ENCODE measurements at regions of chr16 and their contacts with region 1.

Region 1: GRCh38 chr16:13376174-13376573 is 474.8 kb downstream of the SHISA9 start:
- DNase-seq: peak; percentile 63
- ATAC-seq: peak; percentile 90
- H3K4me3 Mint-ChIP-seq: no peak overlapping the region
- H3K27ac Mint-ChIP-seq: no peak overlapping the region
- H3K4me1 Mint-ChIP-seq: peaks cover 4% of the 10 kb centered on the region
- H3K27me3 Mint-ChIP-seq: no peaks in the 10 kb centered on the region

Region 2: DNA sequence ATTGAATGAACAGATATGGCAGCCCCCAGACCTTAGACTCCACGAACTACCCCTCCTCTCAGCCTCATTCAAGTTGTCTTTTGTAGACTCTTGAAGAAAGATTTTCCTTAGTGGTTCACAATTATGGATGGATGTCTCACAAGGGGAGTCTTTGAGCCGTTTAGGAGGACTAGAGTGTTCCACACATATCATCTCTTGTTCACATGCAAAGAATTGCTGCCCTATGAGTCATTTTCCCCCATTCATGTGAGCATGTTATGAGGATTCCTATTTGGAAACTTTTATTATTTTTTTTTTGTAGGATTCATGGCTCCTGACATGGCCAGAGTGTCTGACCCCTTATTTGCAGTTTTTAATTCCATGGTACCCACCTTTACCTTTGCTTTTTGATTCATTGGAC is 237.6 kb before region 1 on chr16:
- CTCF ChIA-PET with region 1: no interaction called
- POLR2A ChIA-PET with region 1: no interaction called
- intact Hi-C with region 1: no loop called
- DNase-seq: no peak
- ATAC-seq: no peak
- H3K4me3 Mint-ChIP-seq: no peak overlapping the region
- H3K27ac Mint-ChIP-seq: no peak overlapping the region
- H3K4me1 Mint-ChIP-seq: no peaks in the 10 kb centered on the region
- H3K27me3 Mint-ChIP-seq: peaks cover 2% of the 10 kb centered on the region

Region 3: DNA sequence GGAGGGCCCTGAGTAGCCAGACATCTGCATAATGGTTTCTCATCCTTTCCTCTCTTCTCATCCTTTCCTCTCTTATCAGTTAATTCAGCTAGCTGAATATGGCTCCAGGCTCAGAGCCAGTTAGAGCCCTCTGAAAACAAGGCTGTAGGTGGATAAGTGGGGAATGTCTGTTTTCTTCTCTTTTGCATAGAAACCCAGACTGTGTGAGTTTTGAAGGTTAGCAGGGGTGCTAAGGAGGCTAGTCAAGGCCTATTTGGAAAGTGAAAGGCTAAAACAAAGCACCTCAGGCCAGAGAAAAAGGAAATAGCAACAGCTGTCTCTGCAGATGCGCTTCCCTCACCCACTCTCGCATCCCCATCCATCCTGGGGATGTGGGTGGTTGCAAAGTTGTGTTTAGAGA is 53.8 kb before region 1 on chr16:
- CTCF ChIA-PET with region 1: interaction called, 3 read pairs
- POLR2A ChIA-PET with region 1: no interaction called
- intact Hi-C with region 1: loop called in 1 of 2 experiments (anchors 5 kb)
- DNase-seq: no peak
- ATAC-seq: no peak
- H3K4me3 Mint-ChIP-seq: no peak overlapping the region
- H3K27ac Mint-ChIP-seq: no peak overlapping the region
- H3K4me1 Mint-ChIP-seq: no peaks in the 10 kb centered on the region
- H3K27me3 Mint-ChIP-seq: no peaks in the 10 kb centered on the region

Measured in activated CD4-positive, alpha-beta T cell treated with anti-CD3 and anti-CD28 coated beads for 36 hours (primary cell).